Panc1 (cell line): ENCODE measurements at regions of chr10 and their contacts with region 1.

Region 1: GRCh38 chr10:75150656-75151055 is 39.2 kb downstream of the SAMD8 start:
- DNase-seq: no peak
- ATAC-seq: no peak
- H3K4me3 ChIP-seq: no peak overlapping the region
- H3K27ac ChIP-seq: no peak overlapping the region
- H3K4me1 ChIP-seq: no peaks in the 10 kb centered on the region
- H3K27me3 ChIP-seq: no peaks in the 10 kb centered on the region
- CTCF ChIP-seq: no peak

Region 2: GRCh38 chr10:74363727-74364126 is 786.9 kb before region 1 on chr10:
- CTCF ChIA-PET with region 1: no interaction called
- POLR2A ChIA-PET with region 1: interaction called, 10 read pairs
- in situ Hi-C with region 1: no loop called
- intact Hi-C with region 1: no loop called
- DNase-seq: no peak
- ATAC-seq: no peak
- H3K4me3 ChIP-seq: no peak overlapping the region
- H3K27ac ChIP-seq: no peak overlapping the region
- H3K4me1 ChIP-seq: no peaks in the 10 kb centered on the region
- H3K27me3 ChIP-seq: no peaks in the 10 kb centered on the region
- CTCF ChIP-seq: no peak

Region 3: GRCh38 chr10:74677951-74678350 is 472.7 kb before region 1 on chr10:
- CTCF ChIA-PET with region 1: no interaction called
- POLR2A ChIA-PET with region 1: no interaction called
- in situ Hi-C with region 1: no loop called
- intact Hi-C with region 1: no loop called
- DNase-seq: no peak
- ATAC-seq: no peak
- H3K4me3 ChIP-seq: no peak overlapping the region
- H3K27ac ChIP-seq: no peak overlapping the region
- H3K4me1 ChIP-seq: no peaks in the 10 kb centered on the region
- H3K27me3 ChIP-seq: no peaks in the 10 kb centered on the region
- CTCF ChIP-seq: no peak